K562 (cell line): ENCODE measurements at regions of chr11 and their contacts with region 1.

Region 1: GRCh38 chr11:37038911-37039310 is 440.9 kb upstream of the RAG2 start:
- DNase-seq: no peak
- ATAC-seq: no peak
- H3K4me3 ChIP-seq: no peak overlapping the region
- H3K27ac ChIP-seq: no peak overlapping the region
- H3K4me1 ChIP-seq: no peaks in the 10 kb centered on the region
- H3K27me3 ChIP-seq: no peaks in the 10 kb centered on the region
- CTCF ChIP-seq: no peak
- EP300 ChIP-seq: no peak
- POLR2A ChIP-seq: no peak
- RAD21 ChIP-seq: no peak

Region 2: DNA sequence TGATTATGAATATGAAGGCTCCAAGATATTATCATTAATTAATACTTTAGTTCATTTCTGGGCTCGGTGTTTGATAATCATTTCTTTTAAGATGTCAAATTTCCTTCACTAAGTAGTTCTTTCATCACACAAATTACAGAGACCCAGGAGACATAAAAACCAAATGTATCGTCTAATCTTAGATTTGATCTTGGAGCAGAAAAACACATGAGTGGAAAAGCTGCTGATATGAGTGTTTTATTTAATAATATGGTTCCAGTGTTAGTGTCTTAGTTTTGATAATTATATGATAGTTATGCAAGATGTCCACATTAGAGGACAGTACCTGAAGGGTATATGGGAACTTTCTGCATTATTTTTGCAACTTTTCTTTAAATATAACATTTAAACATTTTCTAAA is 53.6 kb after region 1 on chr11:
- CTCF ChIA-PET with region 1: no interaction called
- POLR2A ChIA-PET with region 1: no interaction called
- in situ Hi-C with region 1: no loop called
- intact Hi-C with region 1: loop called (anchors 10 kb)
- DNase-seq: no peak
- ATAC-seq: no peak
- H3K4me3 ChIP-seq: no peak overlapping the region
- H3K27ac ChIP-seq: no peak overlapping the region
- H3K4me1 ChIP-seq: no peaks in the 10 kb centered on the region
- H3K27me3 ChIP-seq: no peaks in the 10 kb centered on the region
- CTCF ChIP-seq: no peak
- EP300 ChIP-seq: no peak
- POLR2A ChIP-seq: no peak
- RAD21 ChIP-seq: no peak